Head of caudate nucleus (tissue), 42 donors: ENCODE measurements at regions of chr6 and their contacts with region 1.

Region 1: GRCh38 chr6:137707590-137708360 is 159.3 kb upstream of the TNFAIP3 start:
- DNase-seq: peak in 39 of 42 donors; percentile 10 to 80 (median 51)

Region 2: GRCh38 chr6:137866914-137867684 is 159.3 kb after region 1 on chr6 and contains the start of gene TNFAIP3:
- intact Hi-C with region 1: loop called (anchors 2 kb)
- DNase-seq: peak; percentile 65 to 93 (median 86)

Region 3: DNA sequence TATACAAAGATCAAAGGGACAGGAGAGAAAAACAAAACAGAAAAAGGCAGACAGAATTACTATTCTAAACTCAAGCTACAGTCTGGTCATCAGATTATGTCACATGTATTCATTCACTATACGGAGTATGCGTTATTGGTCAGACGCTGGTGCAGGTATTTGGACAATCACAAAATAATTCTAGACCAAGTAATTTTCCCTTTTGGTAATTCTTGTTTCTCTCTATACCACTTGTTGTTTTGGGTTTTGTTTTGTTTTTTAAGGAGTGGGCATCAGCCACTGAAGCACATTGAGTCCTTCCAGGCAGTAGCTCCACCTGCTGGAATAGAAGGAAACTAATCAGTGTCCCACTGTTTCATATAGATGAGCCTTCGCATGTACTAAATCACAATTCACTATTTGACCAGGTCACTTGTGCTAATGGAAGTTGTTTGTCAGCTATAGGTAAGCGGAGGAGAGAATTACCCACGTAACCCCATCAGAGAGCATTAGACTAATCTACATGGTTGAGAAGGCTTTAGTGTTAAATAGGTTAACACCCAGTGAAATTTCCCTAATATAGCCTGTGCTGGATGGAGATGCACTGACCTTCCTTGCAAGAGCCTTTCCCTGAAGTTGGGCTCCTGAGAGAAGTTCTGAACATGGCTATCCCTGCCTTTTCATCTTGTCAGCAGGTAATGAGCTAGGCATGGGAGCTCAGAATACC is 237.2 kb after region 1 on chr6:
- intact Hi-C with region 1: loop called (anchors 5 kb)
- DNase-seq: peak in 10 of 42 donors; percentile 3 to 52 (median 22)